Activated CD4-positive, alpha-beta T cell treated with anti-CD3 and anti-CD28 coated beads for 36 hours (primary cell): ENCODE measurements at regions of chr11 and their contacts with region 1.

Region 1: DNA sequence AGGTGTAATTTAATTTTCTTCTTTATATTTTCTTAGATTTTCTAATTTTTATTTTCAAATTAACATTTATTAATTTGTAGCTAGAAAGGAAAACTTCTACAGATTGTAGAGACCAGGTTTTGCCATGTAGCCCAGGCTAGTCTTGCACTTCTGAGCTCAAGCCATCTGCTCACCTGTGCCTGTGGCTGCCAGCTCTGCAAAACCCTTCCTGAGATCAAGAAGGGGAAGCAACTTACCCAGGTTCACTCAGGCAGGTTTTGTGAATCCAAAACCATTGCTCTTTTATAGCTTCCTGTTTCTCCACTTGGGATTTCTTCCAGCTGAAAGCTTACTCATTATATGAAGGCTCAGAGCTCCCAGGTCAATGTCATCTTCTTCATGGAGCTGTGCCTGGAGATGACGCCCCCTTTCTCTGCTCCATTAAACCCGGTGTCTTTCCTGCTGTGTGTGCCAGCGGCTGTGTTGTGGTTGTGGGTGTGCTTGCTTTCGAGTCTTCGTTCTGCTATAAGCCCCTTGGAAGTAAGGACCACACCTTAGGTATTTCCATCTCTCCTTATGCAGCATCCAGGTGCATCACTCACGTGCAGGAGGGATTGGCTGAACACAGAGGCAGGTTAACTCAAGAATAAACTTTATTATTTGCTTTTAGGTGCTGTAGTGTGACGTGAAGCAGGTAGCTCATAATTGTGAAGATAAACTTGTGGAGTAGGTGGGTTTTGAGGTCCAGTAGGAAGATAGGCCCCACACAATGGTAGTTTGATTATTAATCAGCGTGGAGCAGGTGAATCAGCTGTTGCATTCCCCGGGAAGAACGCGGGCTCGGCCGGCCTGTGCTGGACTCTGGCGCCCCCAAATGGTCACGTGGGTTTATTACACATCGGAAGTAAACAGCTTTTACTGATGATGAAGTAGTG is 42.2 kb upstream of the INCENP start:
- DNase-seq: peak; percentile 90
- ATAC-seq: peak; percentile 92
- H3K4me3 Mint-ChIP-seq: no peak overlapping the region
- H3K27ac Mint-ChIP-seq: no peak overlapping the region
- H3K4me1 Mint-ChIP-seq: peaks cover 8% of the 10 kb centered on the region
- H3K27me3 Mint-ChIP-seq: no peaks in the 10 kb centered on the region

Region 2: GRCh38 chr11:61679893-61680621 is 401.6 kb before region 1 on chr11 and contains the start of gene DAGLA:
- CTCF ChIA-PET with region 1: no interaction called
- POLR2A ChIA-PET with region 1: no interaction called
- intact Hi-C with region 1: no loop called
- DNase-seq: peak; percentile 86
- ATAC-seq: peak; percentile 86
- H3K4me3 Mint-ChIP-seq: peak within 1 kb of the TSS; percentile 61
- H3K27ac Mint-ChIP-seq: no peak within 1 kb of the TSS
- H3K4me1 Mint-ChIP-seq: peaks cover 4% of the 10 kb centered on the region
- H3K27me3 Mint-ChIP-seq: peaks cover 18% of the 10 kb centered on the region
- total RNA-seq, gene DAGLA: 0.09 to 0.14 TPM

Region 3: GRCh38 chr11:61803889-61804647 is 277.6 kb before region 1 on chr11:
- CTCF ChIA-PET with region 1: no interaction called
- POLR2A ChIA-PET with region 1: no interaction called
- intact Hi-C with region 1: no loop called
- DNase-seq: no peak
- ATAC-seq: no peak
- H3K4me3 Mint-ChIP-seq: no peak overlapping the region
- H3K27ac Mint-ChIP-seq: no peak overlapping the region
- H3K4me1 Mint-ChIP-seq: no peaks in the 10 kb centered on the region
- H3K27me3 Mint-ChIP-seq: no peaks in the 10 kb centered on the region

Region 4: DNA sequence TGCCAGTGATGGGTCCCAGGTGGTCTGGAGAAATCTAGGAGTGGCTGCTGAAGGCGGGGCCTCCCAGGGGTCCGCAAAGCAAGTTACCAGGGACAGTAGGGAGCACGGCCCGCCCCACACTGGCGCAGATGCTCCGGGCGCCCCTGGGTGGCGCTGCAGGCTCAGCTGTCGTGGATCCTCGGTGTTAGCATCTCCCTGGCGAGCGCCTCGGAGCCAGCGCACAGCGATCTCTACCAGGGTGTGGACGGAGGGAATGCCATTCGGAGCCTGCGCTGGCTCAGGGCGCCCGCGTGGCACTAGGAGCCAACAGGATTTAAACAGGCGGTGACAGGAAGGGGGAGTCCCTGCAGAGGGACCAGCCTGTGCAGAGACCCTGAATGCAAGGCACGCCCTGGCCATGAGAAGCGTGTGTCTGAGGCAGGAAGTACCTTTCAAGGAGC is 210.5 kb before region 1 on chr11:
- CTCF ChIA-PET with region 1: interaction called, 35 read pairs
- POLR2A ChIA-PET with region 1: no interaction called
- intact Hi-C with region 1: loop called in 1 of 2 experiments (anchors 1 kb)
- DNase-seq: peak; percentile 84
- ATAC-seq: peak; percentile 98
- H3K4me3 Mint-ChIP-seq: peak overlapping the region; percentile 46
- H3K27ac Mint-ChIP-seq: no peak overlapping the region
- H3K4me1 Mint-ChIP-seq: peaks cover 2% of the 10 kb centered on the region
- H3K27me3 Mint-ChIP-seq: peaks cover 3% of the 10 kb centered on the region

Region 5: GRCh38 chr11:61899146-61899841 is 182.3 kb before region 1 on chr11:
- CTCF ChIA-PET with region 1: interaction called, 232 read pairs
- POLR2A ChIA-PET with region 1: interaction called, 7 read pairs
- intact Hi-C with region 1: loop called (anchors 1 kb)
- DNase-seq: peak; percentile 95
- ATAC-seq: peak; percentile 94
- H3K4me3 Mint-ChIP-seq: peak overlapping the region; percentile 30
- H3K27ac Mint-ChIP-seq: peak overlapping the region; percentile 55
- H3K4me1 Mint-ChIP-seq: peaks cover 3% of the 10 kb centered on the region
- H3K27me3 Mint-ChIP-seq: no peaks in the 10 kb centered on the region

Region 6: GRCh38 chr11:61947486-61948210 is 134.0 kb before region 1 on chr11:
- CTCF ChIA-PET with region 1: interaction called, 67 read pairs
- POLR2A ChIA-PET with region 1: no interaction called
- intact Hi-C with region 1: loop called (anchors 1 to 5 kb)
- DNase-seq: peak; percentile 84
- ATAC-seq: peak; percentile 72
- H3K4me3 Mint-ChIP-seq: no peak overlapping the region
- H3K27ac Mint-ChIP-seq: no peak overlapping the region
- H3K4me1 Mint-ChIP-seq: peaks cover 5% of the 10 kb centered on the region
- H3K27me3 Mint-ChIP-seq: peaks cover 2% of the 10 kb centered on the region

Region 7: DNA sequence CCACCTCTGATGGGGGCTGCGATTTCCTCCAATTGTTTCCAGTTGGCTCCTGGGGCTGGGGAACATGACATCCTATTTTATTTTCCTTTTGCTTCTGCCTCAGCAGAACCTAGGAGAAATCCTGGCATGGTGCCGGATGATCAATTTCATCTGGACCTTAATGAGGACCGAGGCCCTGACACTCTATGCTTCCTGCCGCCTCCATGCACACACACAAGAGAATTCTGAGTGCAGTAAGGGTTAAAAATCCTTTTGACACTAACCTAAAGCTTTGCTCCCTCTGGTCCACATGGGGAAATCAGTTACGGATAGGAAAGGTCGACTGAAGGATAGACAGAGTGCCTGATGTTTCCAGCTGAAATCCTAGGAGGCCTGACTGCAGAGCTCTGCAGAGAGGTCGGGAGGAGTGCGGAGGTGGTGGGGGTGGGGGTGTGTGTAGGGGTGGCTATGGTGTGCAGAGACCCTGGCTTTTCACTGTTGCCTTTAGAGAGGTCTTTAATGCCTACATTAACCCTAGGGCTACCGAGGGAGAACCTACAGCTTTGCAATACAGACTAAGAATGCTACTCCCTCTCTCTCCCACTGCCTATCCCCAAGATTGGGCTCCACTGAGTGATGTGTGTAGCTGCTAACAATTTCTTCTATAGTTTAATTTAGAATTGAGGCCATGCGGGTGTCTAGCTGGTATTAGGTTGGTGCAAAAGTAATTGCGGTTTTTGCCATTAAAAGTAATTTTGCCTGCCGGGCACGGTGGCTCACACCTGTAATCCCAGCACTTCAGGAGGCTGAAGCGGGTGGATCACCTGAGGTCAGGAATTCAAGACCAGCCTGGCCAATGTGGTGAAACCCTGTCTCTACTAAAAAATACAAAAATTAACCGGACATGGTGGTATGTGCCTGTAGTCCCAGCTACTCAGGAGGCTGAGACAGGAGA is 11.4 kb before region 1 on chr11:
- CTCF ChIA-PET with region 1: interaction called, 18 read pairs
- POLR2A ChIA-PET with region 1: no interaction called
- intact Hi-C with region 1: no loop called
- DNase-seq: no peak
- ATAC-seq: no peak
- H3K4me3 Mint-ChIP-seq: no peak overlapping the region
- H3K27ac Mint-ChIP-seq: no peak overlapping the region
- H3K4me1 Mint-ChIP-seq: peaks cover 13% of the 10 kb centered on the region
- H3K27me3 Mint-ChIP-seq: peaks cover 5% of the 10 kb centered on the region

Region 8: DNA sequence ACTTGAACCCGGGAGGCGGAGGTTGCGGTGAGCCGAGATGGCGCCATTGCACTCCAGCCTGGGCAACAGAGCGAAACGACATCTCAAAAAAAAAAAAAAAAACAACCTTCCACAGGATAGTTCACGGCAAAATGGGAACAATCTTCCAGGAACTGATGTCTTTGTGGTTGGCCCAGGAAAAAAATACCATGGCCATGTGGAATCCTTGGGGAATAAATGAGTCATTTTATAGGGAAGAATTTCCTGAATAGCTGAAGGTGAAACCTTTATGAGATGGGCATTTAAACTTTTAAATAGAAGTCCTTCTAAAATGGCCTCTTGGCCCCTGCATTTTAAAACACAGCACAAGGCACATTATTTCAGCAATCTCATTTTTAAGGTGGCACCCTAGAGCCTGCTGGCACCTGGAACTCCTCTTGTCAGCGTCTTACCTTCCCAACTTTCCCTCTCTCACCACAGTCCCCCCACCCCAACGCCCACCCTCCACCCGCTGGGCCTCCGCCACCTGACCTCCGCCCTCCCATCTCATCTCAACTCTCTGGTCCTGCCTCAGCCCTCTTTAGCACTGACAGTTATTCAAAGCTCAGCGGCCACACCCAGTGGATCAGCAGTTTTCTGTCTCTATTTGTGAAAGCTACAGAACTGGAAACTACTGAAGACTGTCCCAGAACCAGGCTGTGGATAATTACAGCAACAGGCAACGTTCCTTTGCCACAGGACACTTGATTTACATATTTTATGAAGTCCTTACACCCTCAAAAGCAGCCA is 380.3 kb after region 1 on chr11:
- CTCF ChIA-PET with region 1: no interaction called
- POLR2A ChIA-PET with region 1: no interaction called
- intact Hi-C with region 1: no loop called
- DNase-seq: no peak
- ATAC-seq: no peak
- H3K4me3 Mint-ChIP-seq: no peak overlapping the region
- H3K27ac Mint-ChIP-seq: no peak overlapping the region
- H3K4me1 Mint-ChIP-seq: no peaks in the 10 kb centered on the region
- H3K27me3 Mint-ChIP-seq: no peaks in the 10 kb centered on the region